Stomach (tissue), 19 donors: ENCODE measurements at regions of chr7 and their contacts with region 1.

Region 1: DNA sequence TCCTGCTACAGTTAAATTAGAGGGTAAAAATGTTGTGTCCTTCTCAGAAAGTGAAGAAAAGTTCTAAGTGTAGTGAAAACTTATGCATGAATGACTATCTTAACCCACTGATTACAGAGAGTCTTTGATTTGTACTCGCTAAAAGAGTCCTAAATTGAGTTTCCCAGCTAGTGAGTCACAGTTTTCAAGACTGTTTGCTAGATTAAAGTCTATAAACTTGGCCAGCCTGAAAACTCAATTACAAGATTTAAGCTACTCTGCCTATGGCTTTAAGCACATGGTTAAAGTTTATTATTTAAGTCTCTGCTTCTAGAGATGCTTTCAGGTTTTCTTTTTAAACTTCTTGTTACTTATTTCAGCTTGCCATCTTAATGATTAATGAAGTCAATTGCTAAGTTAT is 44.4 kb downstream of the MRPS24 start:
- DNase-seq: no peak
- H3K4me3 ChIP-seq: no peak overlapping the region
- H3K27ac ChIP-seq: no peak overlapping the region
- H3K4me1 ChIP-seq: no peaks in the 10 kb centered on the region
- H3K27me3 ChIP-seq: peaks cover 0 to 20% (median 0%) of the 10 kb centered on the region in 3 donors
- CTCF ChIP-seq: no peak
- EP300 ChIP-seq: no peak
- POLR2A ChIP-seq: no peak

Region 2: DNA sequence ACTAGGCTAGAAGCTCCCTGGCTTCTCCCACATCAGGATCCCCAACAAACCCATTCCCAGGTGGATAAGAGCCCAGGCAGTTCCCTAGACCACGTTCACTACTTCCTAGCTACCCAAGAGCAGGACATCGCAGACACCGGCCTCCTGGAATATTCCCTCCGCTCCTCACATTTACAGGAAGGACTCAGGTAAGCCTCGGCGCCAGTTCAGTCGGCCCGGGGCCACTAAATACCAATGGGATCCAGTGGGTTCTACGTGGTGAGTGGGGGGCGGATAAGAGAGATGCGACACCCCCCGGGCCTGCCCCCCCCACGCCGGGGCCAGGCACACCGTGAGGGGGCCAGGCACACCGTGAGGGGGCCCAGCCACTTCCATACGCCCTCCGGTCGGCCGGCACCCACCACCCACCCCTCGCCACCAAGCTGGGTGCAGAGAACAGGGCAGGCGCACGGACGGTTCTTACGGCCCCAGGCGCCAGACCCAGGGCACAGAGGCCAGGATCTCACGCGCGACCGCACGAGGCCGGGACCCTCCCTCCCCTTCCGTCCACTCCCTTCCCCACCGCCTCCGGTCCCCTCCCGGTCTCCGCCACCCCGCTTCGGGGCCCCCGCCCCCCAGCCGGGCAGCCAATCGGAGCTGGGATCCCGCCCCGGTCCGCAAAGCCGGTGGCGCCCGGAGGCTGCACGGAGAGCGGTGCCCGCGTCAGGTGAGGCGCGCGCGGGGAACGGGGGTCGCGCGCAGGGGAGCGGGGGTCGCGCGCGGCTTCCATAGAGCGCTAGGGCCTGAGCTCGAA is 66.7 kb before region 1 on chr7 and contains the start of gene BLVRA:
- intact Hi-C with region 1: loop called (anchors 10 kb)
- DNase-seq: peak; percentile 68 to 88
- H3K4me3 ChIP-seq: peak within 1 kb of the TSS; percentile 71 to 90 (median 84)
- H3K27ac ChIP-seq: peak within 1 kb of the TSS; percentile 77 to 90 (median 78)
- H3K4me1 ChIP-seq: peaks cover 5 to 35% (median 22%) of the 10 kb centered on the region in 4 donors
- H3K27me3 ChIP-seq: no peaks in the 10 kb centered on the region
- CTCF ChIP-seq: no peak
- EP300 ChIP-seq: no peak
- POLR2A ChIP-seq: no peak
- total RNA-seq, gene BLVRA: 15.2 to 52.7 (median 33.5) TPM

Region 3: DNA sequence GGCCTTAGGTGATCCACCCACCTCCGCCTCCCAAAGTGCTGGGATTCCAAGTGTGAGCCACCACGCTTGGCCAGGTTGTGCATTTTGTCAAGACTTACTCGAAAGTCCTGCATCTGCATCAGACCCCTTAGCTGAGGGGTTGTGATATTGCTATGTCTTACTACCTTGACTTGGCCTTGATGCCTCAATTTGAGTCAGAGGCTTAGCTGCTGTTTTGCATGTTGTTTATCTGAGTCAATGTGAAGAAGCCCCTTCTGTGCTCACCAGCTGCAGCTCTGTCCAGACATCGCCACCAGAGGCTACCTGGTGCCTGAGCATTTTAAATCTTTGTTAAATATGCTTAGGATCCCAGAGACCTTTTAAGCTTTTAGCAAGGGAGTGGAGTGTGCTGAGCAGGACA is 119.3 kb after region 1 on chr7:
- intact Hi-C with region 1: no loop called
- DNase-seq: no peak
- H3K4me3 ChIP-seq: no peak overlapping the region
- H3K27ac ChIP-seq: no peak overlapping the region
- H3K4me1 ChIP-seq: peaks cover 0 to 11% (median 1%) of the 10 kb centered on the region in 4 donors
- H3K27me3 ChIP-seq: no peaks in the 10 kb centered on the region
- CTCF ChIP-seq: no peak
- EP300 ChIP-seq: no peak
- POLR2A ChIP-seq: no peak